Endothelial cell of umbilical vein (primary cell): ENCODE measurements at regions of chr1 and their contacts with region 1.

Region 1: DNA sequence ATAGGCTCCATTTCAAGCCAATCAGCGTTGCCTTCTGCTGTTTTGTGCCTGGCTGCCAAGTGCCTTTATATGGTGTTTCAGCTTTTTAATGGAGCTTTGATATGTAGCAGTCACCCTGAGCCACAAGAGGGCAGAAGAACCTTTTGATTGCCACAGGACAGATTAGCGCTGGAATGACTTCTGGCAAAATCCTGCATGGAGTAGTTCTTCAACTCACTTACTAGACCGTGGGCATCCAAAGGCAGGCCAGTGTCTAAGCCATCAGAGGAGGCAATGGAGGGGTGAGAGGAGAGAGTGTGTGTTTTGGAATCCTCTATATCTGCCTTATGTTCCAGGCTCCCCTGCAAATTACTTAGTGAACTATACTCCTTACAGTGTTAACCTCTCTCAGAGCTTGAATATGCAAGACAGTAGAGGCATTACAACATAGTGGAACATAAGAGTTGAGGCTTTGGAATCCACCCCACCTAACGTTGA is 56.2 kb downstream of the ST3GAL3 start:
- DNase-seq: peak; percentile 89
- H3K4me3 ChIP-seq: no peak overlapping the region
- H3K27ac ChIP-seq: no peak overlapping the region
- H3K4me1 ChIP-seq: peaks cover 6% of the 10 kb centered on the region
- H3K27me3 ChIP-seq: no peaks in the 10 kb centered on the region
- CTCF ChIP-seq: peak; percentile 78 to 86
- POLR2A ChIP-seq: no peak

Region 2: GRCh38 chr1:43753422-43753821 is 10.1 kb before region 1 on chr1:
- CTCF ChIA-PET with region 1: interaction called, 27 read pairs
- POLR2A ChIA-PET with region 1: no interaction called
- dilution Hi-C with region 1: no loop called
- intact Hi-C with region 1: no loop called
- DNase-seq: no peak
- H3K4me3 ChIP-seq: no peak overlapping the region
- H3K27ac ChIP-seq: no peak overlapping the region
- H3K4me1 ChIP-seq: no peaks in the 10 kb centered on the region
- H3K27me3 ChIP-seq: no peaks in the 10 kb centered on the region
- CTCF ChIP-seq: no peak
- POLR2A ChIP-seq: no peak

Region 3: GRCh38 chr1:43814401-43814800 is 50.9 kb after region 1 on chr1:
- CTCF ChIA-PET with region 1: interaction called, 10 read pairs
- POLR2A ChIA-PET with region 1: no interaction called
- dilution Hi-C with region 1: no loop called
- intact Hi-C with region 1: no loop called
- DNase-seq: no peak
- H3K4me3 ChIP-seq: no peak overlapping the region
- H3K27ac ChIP-seq: no peak overlapping the region
- H3K4me1 ChIP-seq: no peaks in the 10 kb centered on the region
- H3K27me3 ChIP-seq: no peaks in the 10 kb centered on the region
- CTCF ChIP-seq: no peak
- POLR2A ChIP-seq: no peak

Region 4: GRCh38 chr1:43890815-43891214 is 127.3 kb after region 1 on chr1:
- CTCF ChIA-PET with region 1: interaction called, 16 read pairs
- POLR2A ChIA-PET with region 1: no interaction called
- dilution Hi-C with region 1: no loop called
- intact Hi-C with region 1: no loop called
- DNase-seq: peak; percentile 66
- H3K4me3 ChIP-seq: no peak overlapping the region
- H3K27ac ChIP-seq: no peak overlapping the region
- H3K4me1 ChIP-seq: no peaks in the 10 kb centered on the region
- H3K27me3 ChIP-seq: no peaks in the 10 kb centered on the region
- CTCF ChIP-seq: no peak
- POLR2A ChIP-seq: no peak

Region 5: GRCh38 chr1:43934101-43934985 is 170.8 kb after region 1 on chr1:
- CTCF ChIA-PET with region 1: interaction called, 965 read pairs
- POLR2A ChIA-PET with region 1: interaction called, 4 read pairs
- dilution Hi-C with region 1: loop called (anchors 25 kb)
- intact Hi-C with region 1: loop called (anchors 1 kb)
- DNase-seq: peak; percentile 42
- H3K4me3 ChIP-seq: no peak overlapping the region
- H3K27ac ChIP-seq: no peak overlapping the region
- H3K4me1 ChIP-seq: peaks cover 5% of the 10 kb centered on the region
- H3K27me3 ChIP-seq: peaks cover 3 to 9% of the 10 kb centered on the region in 2 experiments
- CTCF ChIP-seq: peak; percentile 63 to 91
- POLR2A ChIP-seq: no peak

Region 6: GRCh38 chr1:43991476-43992231 is 228.1 kb after region 1 on chr1 and contains the start of gene CCDC24:
- CTCF ChIA-PET with region 1: interaction called, 13 read pairs
- POLR2A ChIA-PET with region 1: no interaction called
- dilution Hi-C with region 1: no loop called
- intact Hi-C with region 1: loop called (anchors 5 kb)
- DNase-seq: peak; percentile 59
- H3K4me3 ChIP-seq: peak within 1 kb of the TSS; percentile 39 to 55 (median 49)
- H3K27ac ChIP-seq: no peak within 1 kb of the TSS
- H3K4me1 ChIP-seq: peaks cover 7% of the 10 kb centered on the region
- H3K27me3 ChIP-seq: no peaks in the 10 kb centered on the region
- CTCF ChIP-seq: no peak
- POLR2A ChIP-seq: peak; percentile 41
- total RNA-seq, gene CCDC24: 2.2 and 2.8 TPM in 2 replicates

Region 7: GRCh38 chr1:44049839-44050238 is 286.3 kb after region 1 on chr1:
- CTCF ChIA-PET with region 1: interaction called, 61 read pairs
- POLR2A ChIA-PET with region 1: no interaction called
- dilution Hi-C with region 1: no loop called
- intact Hi-C with region 1: no loop called
- DNase-seq: peak; percentile 12
- H3K4me3 ChIP-seq: no peak overlapping the region
- H3K27ac ChIP-seq: no peak overlapping the region
- H3K4me1 ChIP-seq: peaks cover 26% of the 10 kb centered on the region
- H3K27me3 ChIP-seq: peaks cover 0 to 4% of the 10 kb centered on the region in 2 experiments
- CTCF ChIP-seq: no peak
- POLR2A ChIP-seq: no peak